Right ventricle myocardium inferior (tissue), 1 donor: ENCODE measurements at regions of chr6 and their contacts with region 1.

Region 1: DNA sequence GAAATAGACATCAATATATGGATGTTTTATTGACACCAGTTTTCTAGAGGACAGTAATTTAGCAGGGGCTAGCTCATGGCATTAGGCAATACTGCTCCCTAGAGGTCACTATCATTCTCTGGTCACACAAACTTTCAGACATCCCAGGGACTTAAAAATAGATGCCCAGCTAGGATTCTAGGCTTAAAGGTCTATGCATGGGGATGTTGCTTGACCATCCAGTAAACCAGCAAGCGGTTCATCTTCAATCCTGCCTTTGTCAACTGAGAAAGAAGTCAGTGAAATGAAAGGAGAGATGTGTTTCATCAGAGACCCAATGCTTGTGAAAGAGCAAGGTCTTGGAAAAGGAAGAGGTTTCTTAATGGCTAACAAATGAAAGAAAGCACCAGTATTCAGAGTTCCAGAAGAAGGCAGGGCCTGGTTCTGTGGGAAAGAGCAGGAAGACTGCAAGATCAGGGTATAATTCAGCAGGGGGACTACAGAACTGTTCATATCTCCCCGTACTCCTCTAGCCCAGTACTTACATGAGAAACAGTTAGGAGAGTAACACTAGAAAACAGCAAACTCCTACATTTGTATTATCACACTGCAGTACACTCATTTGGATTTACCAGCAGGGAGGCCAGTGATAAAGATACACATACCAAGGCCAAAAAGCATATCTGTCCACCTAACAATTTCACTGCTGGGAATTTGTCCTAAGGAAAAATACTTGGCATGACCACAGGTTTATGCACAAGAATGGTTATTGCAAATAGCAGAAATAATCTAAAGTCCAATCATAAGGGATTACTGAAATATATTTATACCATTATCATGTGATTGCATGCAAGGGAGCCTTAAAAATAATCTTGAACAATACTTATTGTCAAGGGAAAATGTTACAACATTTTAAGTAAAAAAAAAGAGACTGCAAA is 151.4 kb upstream of the LAMA2 start:
- DNase-seq: no peak
- ATAC-seq: peak; percentile 80

Region 2: DNA sequence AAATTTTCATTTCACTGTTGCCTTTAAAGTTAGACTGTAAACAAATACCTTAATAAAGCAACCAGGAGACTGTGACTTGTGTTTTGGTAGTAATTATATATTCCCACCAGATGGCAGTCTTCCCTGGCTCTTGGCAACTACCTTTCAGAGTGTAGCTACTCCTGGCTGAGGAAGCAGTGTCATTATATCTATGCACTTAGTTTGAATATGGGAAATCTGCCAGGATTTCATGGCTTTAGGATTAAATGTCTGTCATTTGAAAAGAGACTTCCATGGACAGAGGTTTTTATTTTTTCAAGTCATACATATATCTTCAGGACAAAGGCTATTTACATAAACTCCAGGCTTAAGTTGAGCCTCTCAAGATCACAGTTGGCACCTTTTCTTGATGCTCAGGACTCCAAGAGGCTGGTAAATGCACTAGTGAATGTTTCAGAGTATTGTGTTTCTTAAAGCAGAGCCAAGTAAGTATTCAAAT is 994.5 kb before region 1 on chr6:
- intact Hi-C with region 1: loop called (anchors 10 kb)
- DNase-seq: no peak
- ATAC-seq: peak; percentile 42

Region 3: GRCh38 chr6:127855542-127856159 is 875.9 kb before region 1 on chr6:
- intact Hi-C with region 1: loop called (anchors 10 kb)
- DNase-seq: no peak
- ATAC-seq: no peak

Region 4: GRCh38 chr6:128240024-128240428 is 491.5 kb before region 1 on chr6:
- intact Hi-C with region 1: no loop called
- DNase-seq: no peak
- ATAC-seq: no peak

Region 5: GRCh38 chr6:128630182-128630581 is 101.3 kb before region 1 on chr6:
- intact Hi-C with region 1: no loop called
- DNase-seq: no peak
- ATAC-seq: no peak